Left lung (tissue), 14 donors: ENCODE measurements at regions of chr6 and their contacts with region 1.

Region 1: DNA sequence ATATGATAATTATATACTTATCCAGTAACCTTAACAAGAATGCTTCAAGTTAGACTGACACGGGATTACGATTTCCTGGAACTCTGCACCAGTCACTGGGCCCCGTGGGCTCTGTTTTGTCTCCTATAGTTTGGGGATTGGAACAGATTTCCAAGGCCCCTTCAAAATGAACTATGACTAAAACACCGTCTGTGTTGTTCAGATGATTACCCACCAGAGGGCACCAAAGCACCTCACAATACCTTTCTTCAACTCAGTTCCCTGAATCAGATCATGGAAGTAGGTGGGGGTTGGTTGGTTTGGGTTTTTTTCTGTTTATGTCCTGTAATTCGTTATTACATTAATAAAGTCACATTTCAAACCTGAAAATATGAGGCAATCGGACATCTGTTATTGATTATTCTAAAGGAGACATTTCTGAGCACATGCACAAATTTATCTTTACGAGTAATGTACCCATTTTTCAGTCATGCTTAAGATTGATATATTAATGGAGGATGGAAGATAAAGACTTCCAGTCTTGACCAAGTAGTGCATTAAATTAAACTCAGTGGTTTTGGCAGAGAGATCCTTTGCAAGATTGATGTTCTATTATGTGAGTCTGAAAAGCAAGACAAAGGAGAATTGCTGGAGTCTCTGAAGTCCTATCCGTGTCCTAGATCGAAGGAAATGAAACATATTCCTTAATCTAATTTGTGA is 112.0 kb upstream of the COL21A1 start:
- DNase-seq: peak in 2 of 4 donors; percentile 69 to 86
- ATAC-seq: peak; percentile 98
- H3K4me3 ChIP-seq: no peak overlapping the region
- H3K27ac ChIP-seq: no peak overlapping the region
- H3K4me1 ChIP-seq: peaks cover 0 to 5% of the 10 kb centered on the region in 2 donors
- H3K27me3 ChIP-seq: no peaks in the 10 kb centered on the region
- CTCF ChIP-seq: peak; percentile 70 to 73

Region 2: GRCh38 chr6:56021943-56022342 is 337.4 kb before region 1 on chr6:
- intact Hi-C with region 1: no loop called
- DNase-seq: no peak
- ATAC-seq: no peak
- H3K4me3 ChIP-seq: no peak overlapping the region
- H3K27ac ChIP-seq: no peak overlapping the region
- H3K4me1 ChIP-seq: no peaks in the 10 kb centered on the region
- H3K27me3 ChIP-seq: no peaks in the 10 kb centered on the region
- CTCF ChIP-seq: no peak

Region 3: DNA sequence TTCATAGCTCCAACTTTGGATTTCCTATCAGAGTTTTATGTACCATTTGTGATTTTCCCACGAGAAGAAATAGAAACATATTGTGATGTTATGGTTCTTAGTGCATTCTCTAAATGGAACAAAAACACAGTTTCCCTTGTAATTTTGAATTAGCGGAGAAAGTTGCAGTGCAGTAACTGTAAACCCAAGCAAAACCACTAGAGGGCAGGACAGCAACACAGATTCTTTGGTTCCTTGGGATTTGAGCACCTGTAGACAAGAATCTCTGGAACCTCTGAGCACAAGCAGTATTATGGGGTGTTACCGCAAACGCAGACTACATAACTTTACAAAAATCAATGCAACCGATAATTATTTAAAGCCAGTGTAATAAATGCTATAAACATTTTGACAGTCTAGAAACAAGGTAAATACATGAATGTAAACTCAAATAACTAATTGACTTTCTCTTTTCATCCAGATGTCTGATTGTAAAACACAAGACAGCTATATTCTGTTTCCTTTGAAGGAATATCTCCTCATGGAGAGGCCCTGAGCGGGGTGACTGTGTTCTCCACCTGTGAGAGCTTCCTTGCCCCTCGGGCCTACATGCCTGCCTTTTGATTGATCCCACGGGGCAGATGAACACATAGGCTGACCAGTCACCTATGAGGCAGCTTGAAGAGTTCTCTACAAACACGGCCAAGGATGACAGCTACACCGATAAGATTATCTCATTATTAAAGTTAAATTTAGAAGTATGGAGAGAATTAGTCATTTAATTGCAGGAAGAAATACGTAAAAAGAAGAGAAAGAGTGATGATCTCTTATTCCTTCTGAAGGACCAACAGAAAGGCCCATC is 44.4 kb before region 1 on chr6:
- intact Hi-C with region 1: no loop called
- DNase-seq: peak in 1 of 4 donors; percentile 41
- ATAC-seq: peak; percentile 40
- H3K4me3 ChIP-seq: no peak overlapping the region
- H3K27ac ChIP-seq: no peak overlapping the region
- H3K4me1 ChIP-seq: no peaks in the 10 kb centered on the region
- H3K27me3 ChIP-seq: no peaks in the 10 kb centered on the region
- CTCF ChIP-seq: peak; percentile 70 to 75

Region 4: DNA sequence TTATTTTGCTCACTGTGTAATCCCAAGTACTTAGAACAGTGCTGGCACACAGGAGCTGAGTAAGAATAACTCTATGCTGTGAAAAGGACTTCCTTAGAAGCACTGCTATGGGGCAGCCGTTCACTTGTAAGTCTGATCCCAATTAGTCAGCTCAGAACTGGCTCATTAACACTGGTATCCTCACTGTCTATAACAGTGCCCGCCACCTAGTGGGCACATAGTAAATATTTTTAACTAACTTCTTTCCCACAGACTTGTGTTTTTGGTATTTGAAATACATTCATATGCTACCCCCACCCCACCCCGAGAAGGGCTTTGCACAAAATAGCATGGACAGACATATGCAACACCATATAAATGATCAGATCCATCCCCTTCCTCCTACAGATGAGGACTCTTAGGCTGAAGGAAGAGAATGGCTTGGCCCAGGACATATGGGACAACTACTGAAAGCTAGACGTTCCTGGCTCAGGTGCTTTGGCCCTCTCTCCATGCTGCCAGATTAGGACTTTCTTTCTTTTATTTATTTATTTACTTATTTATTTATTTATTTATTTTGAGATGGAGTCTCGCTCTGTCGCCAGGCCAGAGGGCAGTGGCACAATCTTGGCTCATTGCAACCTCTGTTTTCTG is 236.3 kb after region 1 on chr6:
- intact Hi-C with region 1: loop called in 1 of 2 experiments (anchors 10 kb)
- DNase-seq: peak in 1 of 4 donors; percentile 28
- ATAC-seq: peak; percentile 80
- H3K4me3 ChIP-seq: no peak overlapping the region
- H3K27ac ChIP-seq: no peak overlapping the region
- H3K4me1 ChIP-seq: peaks cover 0 to 25% of the 10 kb centered on the region in 2 donors
- H3K27me3 ChIP-seq: no peaks in the 10 kb centered on the region
- CTCF ChIP-seq: peak; percentile 43 to 49